SK-N-SH (cell line): ENCODE measurements at regions of chr10 and their contacts with region 1.

Region 1: GRCh38 chr10:62594093-62594520 is 210.4 kb upstream of the ADO start:
- DNase-seq: peak; percentile 60
- H3K4me3 ChIP-seq: no peak overlapping the region
- H3K27ac ChIP-seq: no peak overlapping the region
- H3K4me1 ChIP-seq: no peaks in the 10 kb centered on the region; a peak in 1 of 4 replicates
- H3K27me3 ChIP-seq: no peaks in the 10 kb centered on the region
- CTCF ChIP-seq: peak; percentile 96
- EP300 ChIP-seq: no peak
- RAD21 ChIP-seq: peak; percentile 91

Region 2: GRCh38 chr10:62577666-62578291 is 16.3 kb before region 1 on chr10:
- CTCF ChIA-PET with region 1: interaction called, 15 read pairs
- POLR2A ChIA-PET with region 1: no interaction called
- DNase-seq: no peak
- H3K4me3 ChIP-seq: no peak overlapping the region
- H3K27ac ChIP-seq: peak overlapping the region; percentile 79; a peak in 3 of 4 replicates
- H3K4me1 ChIP-seq: peaks cover 0 to 35% of the 10 kb centered on the region in 2 experiments; a peak in 2 of 4 replicates
- H3K27me3 ChIP-seq: no peaks in the 10 kb centered on the region
- CTCF ChIP-seq: no peak
- EP300 ChIP-seq: peak in 1 of 2 experiments; percentile 46; a peak in 1 of 4 replicates
- RAD21 ChIP-seq: no peak

Region 3: DNA sequence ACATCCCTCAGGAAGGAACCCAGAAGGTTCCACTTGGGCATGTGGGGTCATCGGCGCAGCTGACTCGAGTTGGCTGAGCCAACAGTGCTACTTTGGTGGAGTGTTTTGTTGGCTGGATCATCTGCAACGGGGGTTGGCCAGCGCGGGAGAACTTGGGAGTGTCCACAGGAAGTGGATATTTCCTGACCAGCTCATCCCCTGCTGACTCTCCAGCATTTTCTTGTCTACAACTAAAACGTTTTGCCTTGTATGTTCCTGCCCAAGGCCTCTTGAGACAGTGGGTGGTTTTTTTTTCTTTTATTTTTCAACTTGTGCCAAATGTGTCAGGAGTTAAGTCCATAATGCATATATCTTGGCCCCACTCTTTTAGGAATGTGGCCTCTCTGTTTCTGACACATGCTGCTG is 11.3 kb before region 1 on chr10:
- CTCF ChIA-PET with region 1: interaction called, 15 read pairs
- POLR2A ChIA-PET with region 1: no interaction called
- DNase-seq: no peak
- H3K4me3 ChIP-seq: 0 out of 4 replicates have a peak overlapping the region, but pooled peaks of 1 of the 2 experiments have one; percentile 17
- H3K27ac ChIP-seq: peak overlapping the region; percentile 84 to 96; a peak in 3 of 4 replicates
- H3K4me1 ChIP-seq: peaks cover 0 to 47% of the 10 kb centered on the region in 2 experiments
- H3K27me3 ChIP-seq: no peaks in the 10 kb centered on the region
- CTCF ChIP-seq: no peak
- EP300 ChIP-seq: peak in 1 of 2 experiments; percentile 60; a peak in 2 of 4 replicates
- RAD21 ChIP-seq: no peak

Region 4: DNA sequence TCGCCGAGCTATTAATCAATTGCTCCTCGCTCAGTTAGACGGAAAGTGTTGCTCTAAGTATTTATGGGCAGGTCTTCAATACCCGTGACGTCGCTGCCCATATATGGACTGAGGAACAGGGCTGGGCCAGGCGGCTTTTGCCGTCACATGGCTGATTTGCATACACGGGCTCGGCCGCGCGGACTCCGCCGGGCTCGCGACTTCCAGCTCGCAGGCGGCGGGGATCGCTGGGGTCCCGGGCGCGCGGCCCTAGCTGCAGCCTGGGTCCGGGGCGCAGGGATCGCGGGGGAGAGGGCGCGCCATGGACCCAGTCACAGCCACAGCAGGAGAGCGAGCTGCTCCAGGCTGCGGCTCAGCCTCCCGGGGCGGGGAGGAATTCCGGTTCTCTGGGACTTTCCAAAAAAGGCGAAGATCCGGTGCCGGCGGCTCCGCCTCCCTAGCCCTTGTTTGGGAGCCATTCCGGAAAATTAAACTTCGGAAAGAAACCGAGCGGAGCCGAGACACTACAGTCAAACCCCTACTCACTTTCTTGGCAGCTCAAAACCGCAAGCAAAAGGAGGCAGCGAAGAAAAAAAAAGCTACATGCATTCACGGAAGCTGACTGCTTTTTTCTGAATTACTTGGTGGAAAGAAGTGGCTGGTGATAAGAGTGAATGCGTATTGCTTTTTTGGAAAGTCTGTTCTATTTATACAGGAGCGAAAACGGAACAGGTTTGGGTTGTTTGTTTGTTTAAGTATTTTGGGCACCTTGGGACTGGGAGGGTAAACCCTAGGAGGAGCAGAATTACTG is 222.4 kb after region 1 on chr10 and contains the start of gene EGR2:
- CTCF ChIA-PET with region 1: interaction called, 30 read pairs
- POLR2A ChIA-PET with region 1: no interaction called
- DNase-seq: peak; percentile 92
- H3K4me3 ChIP-seq: peak within 1 kb of the TSS; percentile 71 to 73
- H3K27ac ChIP-seq: peak within 1 kb of the TSS in 1 of 2 experiments; percentile 72; a peak in 2 of 4 replicates
- H3K4me1 ChIP-seq: peaks cover 12 to 28% of the 10 kb centered on the region in 2 experiments; a peak in 3 of 4 replicates
- H3K27me3 ChIP-seq: peaks cover 49% of the 10 kb centered on the region
- CTCF ChIP-seq: no peak
- EP300 ChIP-seq: no peak
- RAD21 ChIP-seq: no peak
- polyA plus RNA-seq, gene EGR2: 0.25 and 0.47 TPM in 2 replicates

Region 5: DNA sequence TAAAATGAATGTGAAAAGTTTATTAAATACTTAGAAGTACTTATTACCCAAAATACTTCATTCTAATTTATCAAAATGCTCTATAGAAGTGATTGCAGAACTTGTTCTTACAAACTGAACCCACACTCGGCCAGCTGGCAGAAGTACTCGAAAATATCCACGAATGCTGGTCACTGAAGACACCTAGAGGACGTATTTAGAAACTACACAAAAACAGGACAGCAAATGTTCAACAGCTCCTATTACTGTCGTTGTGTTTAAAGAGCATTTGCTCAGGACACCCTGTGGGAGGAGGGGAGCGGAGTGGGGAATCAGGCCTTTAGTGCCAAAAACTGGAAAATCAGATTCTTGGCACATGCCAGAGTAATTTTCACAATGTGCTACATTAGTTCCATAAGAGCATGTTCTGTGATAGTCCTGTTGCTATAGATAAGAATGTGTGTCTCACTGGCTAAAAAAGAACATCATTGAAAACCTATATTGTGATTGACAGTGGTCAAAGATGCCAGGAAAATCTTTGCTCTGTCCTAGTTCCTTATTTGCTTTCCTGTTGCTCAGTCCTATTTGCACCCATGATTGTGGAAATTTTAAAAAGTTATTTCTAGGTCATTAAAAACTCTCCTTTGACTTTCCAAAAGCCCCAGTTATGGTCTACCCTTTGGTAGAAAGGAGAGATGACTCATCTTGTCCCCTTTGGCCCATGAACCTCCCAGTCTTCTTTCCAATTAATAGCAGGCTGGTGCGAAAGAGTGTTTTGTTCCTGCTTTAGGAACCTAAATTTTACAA is 490.0 kb after region 1 on chr10:
- CTCF ChIA-PET with region 1: interaction called, 40 read pairs
- POLR2A ChIA-PET with region 1: no interaction called
- DNase-seq: peak; percentile 56
- H3K4me3 ChIP-seq: no peak overlapping the region
- H3K27ac ChIP-seq: no peak overlapping the region; a peak in 1 of 4 replicates
- H3K4me1 ChIP-seq: no peaks in the 10 kb centered on the region
- H3K27me3 ChIP-seq: no peaks in the 10 kb centered on the region
- CTCF ChIP-seq: peak; percentile 69
- EP300 ChIP-seq: no peak
- RAD21 ChIP-seq: peak; percentile 94

Region 6: DNA sequence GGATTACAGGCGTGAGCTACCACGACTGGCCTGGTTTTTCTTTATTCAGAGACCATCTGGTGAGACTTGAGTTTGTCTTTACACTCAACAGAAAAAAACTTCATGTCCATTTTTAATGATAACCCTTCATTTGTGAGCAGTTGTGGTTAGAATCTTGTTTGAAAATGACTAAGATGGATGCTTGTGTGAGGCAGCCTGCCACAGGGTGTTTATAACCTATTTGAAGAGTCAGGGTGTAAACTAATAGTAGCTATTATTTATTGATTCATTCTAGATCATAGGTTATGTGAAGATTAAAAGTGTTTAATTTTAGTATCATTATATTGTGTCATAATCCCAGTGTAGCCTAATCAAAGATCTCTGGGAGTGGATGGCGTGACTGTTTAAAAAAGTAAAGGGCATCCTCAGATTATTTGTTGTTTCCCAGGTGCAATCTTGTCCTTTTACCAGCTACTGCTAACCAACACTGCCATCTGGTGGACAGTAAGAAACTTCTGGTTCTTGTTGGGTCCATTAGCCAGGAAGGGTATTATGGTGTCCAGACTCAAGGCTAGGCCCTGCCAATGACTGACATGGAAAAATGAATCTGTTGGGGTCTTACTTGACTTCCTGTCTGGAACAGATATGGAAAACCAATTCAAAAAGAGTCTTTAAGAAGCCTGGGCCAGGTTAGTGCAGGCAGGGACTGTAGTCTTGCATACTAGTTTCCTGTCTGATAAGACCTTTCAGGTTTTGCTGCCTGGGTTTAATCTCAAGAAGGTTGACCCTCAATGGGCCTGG is 563.9 kb after region 1 on chr10:
- CTCF ChIA-PET with region 1: interaction called, 29 read pairs
- POLR2A ChIA-PET with region 1: no interaction called
- DNase-seq: peak; percentile 54
- H3K4me3 ChIP-seq: no peak overlapping the region
- H3K27ac ChIP-seq: no peak overlapping the region
- H3K4me1 ChIP-seq: no peaks in the 10 kb centered on the region
- H3K27me3 ChIP-seq: no peaks in the 10 kb centered on the region
- CTCF ChIP-seq: peak; percentile 88
- EP300 ChIP-seq: no peak
- RAD21 ChIP-seq: peak; percentile 91